ENCODE measurements at regions of chr2 and their contacts with region 1.

Region 1: GRCh38 chr2:54522624-54523281 is 66.6 kb downstream of the SPTBN1 start:
- DNase-seq: peak; percentile 89
- H3K4me3 ChIP-seq: no peak overlapping the region
- H3K27ac ChIP-seq: no peak overlapping the region
- H3K4me1 ChIP-seq: peaks cover 15% of the 10 kb centered on the region
- CTCF ChIP-seq: peak; percentile 93

Region 2: GRCh38 chr2:54657664-54658083 is 134.9 kb after region 1 on chr2:
- CTCF ChIA-PET with region 1: no interaction called
- POLR2A ChIA-PET with region 1: no interaction called
- intact Hi-C with region 1: loop called (anchors 1 kb)
- DNase-seq: peak; percentile 65
- H3K4me3 ChIP-seq: no peak overlapping the region
- H3K27ac ChIP-seq: no peak overlapping the region
- H3K4me1 ChIP-seq: no peaks in the 10 kb centered on the region
- CTCF ChIP-seq: peak; percentile 83

Region 3: DNA sequence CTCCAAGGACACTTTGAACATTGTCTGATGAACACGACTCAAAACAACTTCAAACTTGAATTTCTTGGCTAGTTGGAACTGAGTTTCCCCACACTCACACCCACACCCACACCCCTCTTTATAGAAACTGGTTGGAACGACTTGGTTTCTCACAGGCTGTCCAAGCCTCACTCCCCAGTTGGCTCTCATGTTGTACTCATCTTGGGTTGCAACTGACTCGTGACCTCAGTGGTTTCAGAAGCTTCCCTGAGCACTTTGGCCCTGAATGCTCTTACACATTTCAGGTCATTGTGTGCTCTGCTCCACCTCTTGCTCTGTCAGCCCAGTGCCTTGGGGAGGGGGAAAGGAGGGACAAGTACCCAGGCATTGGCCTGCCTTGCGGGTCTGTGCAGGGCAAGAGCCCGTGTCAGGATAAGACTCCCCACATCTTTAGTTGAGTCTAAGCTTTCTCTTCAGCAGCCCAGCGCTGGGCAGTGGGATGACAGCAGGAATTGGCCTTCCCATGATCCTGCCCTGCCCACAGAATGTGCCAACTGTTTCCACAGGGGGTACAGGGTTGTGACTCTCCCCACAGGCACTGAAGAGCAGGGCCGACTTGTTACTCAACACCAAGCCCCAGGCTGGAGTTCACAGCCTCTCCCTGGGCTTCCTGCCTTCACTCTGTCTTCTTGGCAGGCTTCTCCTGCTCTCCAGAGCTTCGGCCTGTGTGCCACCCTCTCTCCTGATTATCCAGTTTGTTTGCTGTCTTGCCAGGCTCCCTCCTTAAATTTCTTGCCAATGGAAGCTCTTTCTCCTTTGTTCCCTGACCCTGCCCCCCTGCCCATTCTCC is 422.9 kb after region 1 on chr2:
- CTCF ChIA-PET with region 1: no interaction called
- POLR2A ChIA-PET with region 1: no interaction called
- intact Hi-C with region 1: no loop called
- DNase-seq: no peak
- H3K4me3 ChIP-seq: no peak overlapping the region
- H3K27ac ChIP-seq: no peak overlapping the region
- H3K4me1 ChIP-seq: no peaks in the 10 kb centered on the region
- CTCF ChIP-seq: no peak

Region 4: GRCh38 chr2:55175254-55176025 is 652.7 kb after region 1 on chr2:
- CTCF ChIA-PET with region 1: no interaction called
- POLR2A ChIA-PET with region 1: no interaction called
- intact Hi-C with region 1: loop called (anchors 10 kb)
- DNase-seq: peak; percentile 77
- H3K4me3 ChIP-seq: no peak overlapping the region
- H3K27ac ChIP-seq: no peak overlapping the region
- H3K4me1 ChIP-seq: no peaks in the 10 kb centered on the region
- CTCF ChIP-seq: peak; percentile 93